ENCODE measurements at regions of chr1 and their contacts with region 1.

Region 1: GRCh38 chr1:205983925-205984725 is 19.1 kb downstream of the RAB7B start:
- DNase-seq: peak; percentile 69 to 88 (median 88)
- ATAC-seq: peak; percentile 80 to 87
- H3K4me3 ChIP-seq: no peak overlapping the region
- H3K27ac ChIP-seq: peak overlapping the region; percentile 77
- H3K4me1 ChIP-seq: peaks cover 3% of the 10 kb centered on the region
- H3K27me3 ChIP-seq: no peaks in the 10 kb centered on the region

Region 2: DNA sequence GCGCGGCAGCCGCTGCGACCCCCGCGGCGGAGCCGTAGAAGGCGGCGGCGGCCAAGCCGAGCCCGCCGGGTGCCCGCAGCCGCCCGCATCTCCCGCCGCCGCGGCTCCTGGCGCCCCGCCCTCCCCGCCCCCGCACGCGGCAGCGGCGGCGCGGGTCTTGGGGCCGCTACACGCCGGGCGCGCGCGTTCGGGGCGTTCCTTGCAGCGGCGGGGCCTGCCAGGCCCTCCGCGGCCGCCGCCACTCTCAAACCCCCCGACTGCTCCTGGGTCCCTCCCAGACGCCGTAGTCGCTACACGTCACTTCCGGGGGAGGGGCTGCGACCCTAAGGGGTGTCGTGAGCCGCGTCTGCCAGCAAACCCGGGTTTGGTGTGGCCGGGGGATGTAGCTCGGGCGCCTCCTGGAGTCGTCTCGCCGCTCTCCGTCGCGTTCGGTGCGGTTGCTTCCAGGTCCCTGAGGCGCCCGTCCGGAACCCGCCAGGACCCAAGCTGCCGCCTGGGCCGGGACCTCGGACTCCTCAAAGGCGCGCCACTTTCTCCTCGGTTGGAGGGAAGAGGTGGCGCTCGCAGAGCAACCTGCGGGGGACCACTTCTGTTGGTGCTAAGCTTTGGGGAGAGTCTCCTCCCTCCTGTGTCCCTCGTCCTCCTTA is 352.3 kb before region 1 on chr1 and contains the start of gene ELK4:
- intact Hi-C with region 1: no loop called
- DNase-seq: peak; percentile 99 to 100 (median 100)
- ATAC-seq: peak; percentile 98 to 99
- H3K4me3 ChIP-seq: peak within 1 kb of the TSS; percentile 100
- H3K27ac ChIP-seq: peak within 1 kb of the TSS; percentile 100
- H3K4me1 ChIP-seq: no peaks in the 10 kb centered on the region
- H3K27me3 ChIP-seq: no peaks in the 10 kb centered on the region
- total RNA-seq, gene ELK4: 39.7 to 45.0 (median 43.2) TPM

Region 3: GRCh38 chr1:205933671-205934618 is 50.2 kb before region 1 on chr1:
- intact Hi-C with region 1: no loop called
- DNase-seq: no peak
- ATAC-seq: no peak
- H3K4me3 ChIP-seq: no peak overlapping the region
- H3K27ac ChIP-seq: no peak overlapping the region
- H3K4me1 ChIP-seq: peaks cover 2% of the 10 kb centered on the region
- H3K27me3 ChIP-seq: no peaks in the 10 kb centered on the region

Region 4: DNA sequence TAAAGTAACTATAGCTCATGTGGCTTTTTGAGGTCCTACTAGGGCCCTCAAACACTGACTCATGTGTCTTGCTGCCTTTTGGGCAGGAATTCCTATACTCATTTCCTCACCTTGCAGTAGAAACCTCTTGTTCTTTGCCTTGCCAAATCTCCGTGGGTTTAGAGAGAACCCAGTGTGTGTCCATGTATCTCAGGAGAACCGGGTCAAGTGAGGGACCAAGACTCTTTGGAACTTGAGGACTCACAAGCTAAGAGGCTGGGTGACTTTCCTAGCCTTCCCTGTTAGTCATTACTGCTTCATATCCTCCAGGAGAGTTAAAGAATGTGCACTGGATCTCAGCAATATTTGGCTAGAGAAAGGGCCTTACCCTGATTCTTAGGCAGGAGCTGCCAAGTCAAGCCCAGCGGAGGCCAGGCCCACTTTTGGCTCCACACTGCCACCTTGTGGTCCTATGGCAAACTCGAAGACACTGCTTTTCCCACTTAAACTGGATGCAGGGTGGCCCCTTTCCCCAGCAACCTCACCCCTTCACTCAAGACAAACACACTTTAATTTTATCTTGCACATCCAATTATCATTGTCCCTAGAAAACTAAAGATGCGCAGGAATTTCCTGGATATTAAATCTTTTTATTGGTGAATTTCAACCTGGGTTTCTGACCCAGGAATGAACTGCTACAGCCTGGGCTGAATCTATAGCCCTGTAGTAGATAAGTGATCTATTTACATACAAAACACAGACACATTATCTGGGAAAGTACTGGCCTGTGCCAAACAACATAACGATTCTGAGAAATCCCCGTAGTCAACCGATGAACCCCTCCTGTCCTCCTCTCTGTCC is 122.4 kb after region 1 on chr1:
- intact Hi-C with region 1: loop called (anchors 2 to 5 kb)
- DNase-seq: peak; percentile 83 to 93 (median 90)
- ATAC-seq: peak; percentile 84 to 87
- H3K4me3 ChIP-seq: no peak overlapping the region
- H3K27ac ChIP-seq: no peak overlapping the region
- H3K4me1 ChIP-seq: no peaks in the 10 kb centered on the region
- H3K27me3 ChIP-seq: no peaks in the 10 kb centered on the region

Measured in right cardiac atrium (tissue), 5 donors.